Aorta (tissue), 5 donors: ENCODE measurements at regions of chr2 and their contacts with region 1.

Region 1: GRCh38 chr2:229416116-229416694 is 145.1 kb upstream of the PID1 start:
- DNase-seq: peak; percentile 82 to 85
- ATAC-seq: peak; percentile 86
- H3K4me3 ChIP-seq: no peak overlapping the region
- H3K27ac ChIP-seq: peak overlapping the region; percentile 61 to 93
- H3K4me1 ChIP-seq: peaks cover 15% of the 10 kb centered on the region in 2 donors
- H3K27me3 ChIP-seq: no peaks in the 10 kb centered on the region

Region 2: DNA sequence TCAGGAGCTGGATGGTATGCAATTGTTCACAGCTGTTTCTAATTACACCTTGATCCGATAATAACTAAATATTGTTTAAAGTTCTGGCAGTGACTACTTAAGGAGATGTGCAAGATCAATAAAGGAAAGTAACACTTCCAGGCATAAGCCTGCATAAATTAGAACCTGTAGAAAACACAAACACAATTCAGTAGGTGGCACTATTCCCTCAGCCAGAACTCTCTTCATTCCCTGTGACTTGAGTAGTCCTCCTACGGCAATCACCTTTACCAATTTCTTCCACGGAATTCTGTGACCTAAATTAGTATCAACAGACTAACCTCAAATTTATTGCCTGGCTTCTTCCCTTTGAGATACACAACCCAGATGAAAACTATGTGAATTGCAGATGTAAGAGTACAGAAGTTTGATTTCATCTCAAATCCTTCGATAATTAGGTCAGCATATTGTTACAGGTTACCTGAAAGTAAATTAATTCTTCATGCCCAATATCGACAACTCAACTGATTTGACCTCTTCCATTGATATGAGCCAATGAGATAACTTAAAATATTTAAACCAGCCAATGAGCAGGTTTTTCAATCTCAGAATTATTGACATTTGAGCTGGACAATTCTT is 282.9 kb before region 1 on chr2:
- intact Hi-C with region 1: loop called in 1 of 2 experiments (anchors 10 kb)
- DNase-seq: no peak
- ATAC-seq: no peak
- H3K4me3 ChIP-seq: no peak overlapping the region
- H3K27ac ChIP-seq: no peak overlapping the region
- H3K4me1 ChIP-seq: peaks cover 3 to 8% of the 10 kb centered on the region in 2 donors
- H3K27me3 ChIP-seq: no peaks in the 10 kb centered on the region

Region 3: DNA sequence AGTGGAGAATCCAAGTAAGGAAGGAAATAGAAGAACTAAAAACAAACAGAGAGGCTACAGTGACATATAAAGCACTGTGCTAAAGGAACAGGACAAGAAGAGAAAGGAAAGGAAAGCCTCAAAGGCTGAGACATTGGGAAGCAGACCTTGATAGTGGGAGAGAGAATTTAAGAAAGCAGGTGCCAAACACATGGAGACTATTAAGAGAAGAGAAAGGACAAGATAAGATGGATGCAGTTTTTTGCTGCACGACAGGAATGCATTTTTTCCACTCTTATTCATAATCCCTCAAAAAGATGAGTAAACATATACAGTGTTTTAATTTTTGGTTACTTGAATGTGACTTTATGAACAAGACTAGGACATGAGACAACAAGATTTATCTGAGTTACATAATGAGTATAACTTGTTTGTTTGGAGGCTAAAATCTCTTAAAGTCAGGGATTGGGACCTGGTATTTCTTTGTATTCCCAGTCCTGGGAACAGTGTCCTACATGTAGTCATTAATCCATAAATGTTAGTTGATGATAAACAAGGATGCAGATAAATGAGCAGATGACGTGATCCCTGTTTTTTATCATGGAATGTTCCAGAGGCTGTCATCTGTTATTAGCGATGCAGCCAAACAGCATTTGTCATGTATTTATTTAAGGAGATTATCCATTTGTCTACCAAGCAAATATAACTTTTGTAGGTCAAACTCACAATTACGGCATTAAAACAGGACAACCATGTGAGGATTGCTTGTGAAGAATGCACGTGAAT is 156.5 kb after region 1 on chr2:
- intact Hi-C with region 1: no loop called
- DNase-seq: no peak
- ATAC-seq: no peak
- H3K4me3 ChIP-seq: no peak overlapping the region
- H3K27ac ChIP-seq: no peak overlapping the region
- H3K4me1 ChIP-seq: no peaks in the 10 kb centered on the region
- H3K27me3 ChIP-seq: no peaks in the 10 kb centered on the region

Region 4: DNA sequence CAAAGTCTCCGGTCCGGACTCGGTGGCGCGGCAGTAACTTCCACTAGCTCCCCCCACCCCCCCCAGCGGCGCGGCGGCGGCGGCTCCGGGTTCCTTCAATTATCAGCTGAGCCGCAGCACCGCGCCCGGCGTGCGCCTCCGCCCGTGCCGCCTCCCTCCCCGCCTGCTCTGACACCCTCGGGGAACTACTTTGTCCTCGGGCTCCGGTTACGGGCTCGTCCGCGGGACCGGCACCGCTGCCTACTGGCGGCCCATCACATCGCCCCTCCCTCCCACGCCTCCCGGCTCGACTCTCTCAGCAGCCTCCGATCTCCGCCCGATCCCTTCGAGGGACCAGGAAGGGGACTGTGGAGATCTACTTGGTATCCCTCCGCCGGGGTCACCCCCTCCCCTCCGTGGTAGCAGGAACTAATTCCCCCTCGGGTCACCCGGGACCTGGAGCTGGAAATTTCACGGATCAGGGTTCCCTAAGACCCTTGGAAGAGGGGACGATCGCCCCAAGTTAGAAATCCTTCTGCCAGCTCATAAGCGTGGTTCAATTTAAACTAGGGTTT is 505.8 kb after region 1 on chr2 and contains the start of gene TRIP12:
- intact Hi-C with region 1: no loop called
- DNase-seq: peak; percentile 95 to 96
- ATAC-seq: peak; percentile 95
- H3K4me3 ChIP-seq: peak within 1 kb of the TSS; percentile 62 to 87
- H3K27ac ChIP-seq: peak within 1 kb of the TSS; percentile 92 to 97
- H3K4me1 ChIP-seq: peaks cover 0 to 2% of the 10 kb centered on the region in 2 donors
- H3K27me3 ChIP-seq: no peaks in the 10 kb centered on the region
- total RNA-seq, gene TRIP12: 220 to 232 TPM